Naive thymus-derived CD4-positive, alpha-beta T cell (primary cell): ENCODE measurements at regions of chr14 and their contacts with region 1.

Region 1: GRCh38 chr14:105086833-105087307 is 21.6 kb upstream of the GPR132 start:
- DNase-seq: peak; percentile 74 to 88 (median 84)
- ATAC-seq: peak; percentile 92
- H3K4me3 ChIP-seq: peak overlapping the region; percentile 63
- H3K4me3 Mint-ChIP-seq: peak overlapping the region; percentile 64 to 83 (median 78)
- H3K27ac ChIP-seq: peak overlapping the region; percentile 55
- H3K27ac Mint-ChIP-seq: peak overlapping the region in 8 of 9 donors; percentile 3 to 84 (median 55)
- H3K4me1 ChIP-seq: peaks cover 4 to 7% of the 10 kb centered on the region in 2 donors
- H3K4me1 Mint-ChIP-seq: peaks cover 8 to 22% (median 13%) of the 10 kb centered on the region in 7 donors
- H3K27me3 ChIP-seq: no peaks in the 10 kb centered on the region
- H3K27me3 Mint-ChIP-seq: peaks cover 0 to 27% (median 0%) of the 10 kb centered on the region in 5 donors

Region 2: GRCh38 chr14:104965561-104966231 is 121.2 kb before region 1 on chr14:
- CTCF ChIA-PET with region 1: no interaction called
- POLR2A ChIA-PET with region 1: no interaction called
- intact Hi-C with region 1: no loop called
- DNase-seq: peak in 1 of 9 donors; percentile 7
- ATAC-seq: no peak
- H3K4me3 ChIP-seq: no peak overlapping the region
- H3K4me3 Mint-ChIP-seq: no peak overlapping the region
- H3K27ac ChIP-seq: no peak overlapping the region
- H3K27ac Mint-ChIP-seq: no peak overlapping the region
- H3K4me1 ChIP-seq: no peaks in the 10 kb centered on the region
- H3K4me1 Mint-ChIP-seq: no peaks in the 10 kb centered on the region
- H3K27me3 ChIP-seq: peaks cover 0 to 4% of the 10 kb centered on the region in 2 donors
- H3K27me3 Mint-ChIP-seq: peaks cover 5 to 11% (median 8%) of the 10 kb centered on the region in 5 donors

Region 3: DNA sequence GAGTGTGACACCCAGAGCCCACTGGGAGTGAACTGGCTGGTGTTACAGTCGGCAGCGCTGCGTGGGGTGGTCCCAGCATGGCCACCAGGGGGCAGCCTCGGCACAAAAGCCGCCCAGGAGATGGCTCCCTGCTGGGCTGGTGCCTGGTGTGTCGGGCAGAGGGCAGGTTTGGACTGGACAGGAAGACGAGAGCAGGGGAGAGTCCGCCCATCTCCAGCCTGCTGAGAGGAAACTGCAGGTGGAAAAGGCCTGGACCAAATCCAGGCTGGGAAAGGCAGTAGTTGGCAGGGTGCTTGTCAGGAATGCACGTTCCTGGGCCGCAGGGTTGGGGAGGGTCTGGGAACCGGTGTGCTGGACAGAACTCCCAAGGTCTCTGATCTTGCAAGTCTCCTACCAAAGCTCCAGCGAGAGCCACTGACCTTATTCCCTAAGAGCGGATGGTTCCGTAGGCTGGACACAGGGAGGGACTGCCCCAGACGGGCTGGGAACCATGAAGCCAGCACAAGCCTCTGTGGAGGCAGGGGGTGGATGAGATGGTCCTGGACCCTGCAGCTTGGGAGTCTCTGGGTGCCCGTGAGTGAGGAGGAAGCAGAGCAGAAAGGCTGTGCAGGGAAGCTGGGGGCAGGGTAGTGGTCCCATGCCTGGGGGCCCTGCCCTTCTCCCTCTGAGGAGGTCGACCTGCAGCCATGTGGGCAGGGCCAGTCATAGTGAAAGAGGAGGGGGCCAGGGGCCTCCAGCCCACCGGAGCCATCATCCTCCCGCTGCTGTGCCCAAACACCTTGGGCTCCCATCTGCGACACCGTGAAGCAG is 110.5 kb before region 1 on chr14:
- CTCF ChIA-PET with region 1: no interaction called
- POLR2A ChIA-PET with region 1: interaction called, 3 read pairs
- intact Hi-C with region 1: loop called (anchors 1 kb)
- DNase-seq: peak; percentile 67 to 91 (median 83)
- ATAC-seq: peak; percentile 86
- H3K4me3 ChIP-seq: no peak overlapping the region
- H3K4me3 Mint-ChIP-seq: peak overlapping the region; percentile 41 to 92 (median 72)
- H3K27ac ChIP-seq: no peak overlapping the region
- H3K27ac Mint-ChIP-seq: peak overlapping the region in 4 of 9 donors; percentile 3 to 68 (median 33)
- H3K4me1 ChIP-seq: peaks cover 0 to 7% of the 10 kb centered on the region in 2 donors
- H3K4me1 Mint-ChIP-seq: peaks cover 5 to 19% (median 13%) of the 10 kb centered on the region in 7 donors
- H3K27me3 ChIP-seq: peaks cover 0 to 8% of the 10 kb centered on the region in 2 donors
- H3K27me3 Mint-ChIP-seq: peaks cover 8 to 33% (median 16%) of the 10 kb centered on the region in 5 donors

Region 4: DNA sequence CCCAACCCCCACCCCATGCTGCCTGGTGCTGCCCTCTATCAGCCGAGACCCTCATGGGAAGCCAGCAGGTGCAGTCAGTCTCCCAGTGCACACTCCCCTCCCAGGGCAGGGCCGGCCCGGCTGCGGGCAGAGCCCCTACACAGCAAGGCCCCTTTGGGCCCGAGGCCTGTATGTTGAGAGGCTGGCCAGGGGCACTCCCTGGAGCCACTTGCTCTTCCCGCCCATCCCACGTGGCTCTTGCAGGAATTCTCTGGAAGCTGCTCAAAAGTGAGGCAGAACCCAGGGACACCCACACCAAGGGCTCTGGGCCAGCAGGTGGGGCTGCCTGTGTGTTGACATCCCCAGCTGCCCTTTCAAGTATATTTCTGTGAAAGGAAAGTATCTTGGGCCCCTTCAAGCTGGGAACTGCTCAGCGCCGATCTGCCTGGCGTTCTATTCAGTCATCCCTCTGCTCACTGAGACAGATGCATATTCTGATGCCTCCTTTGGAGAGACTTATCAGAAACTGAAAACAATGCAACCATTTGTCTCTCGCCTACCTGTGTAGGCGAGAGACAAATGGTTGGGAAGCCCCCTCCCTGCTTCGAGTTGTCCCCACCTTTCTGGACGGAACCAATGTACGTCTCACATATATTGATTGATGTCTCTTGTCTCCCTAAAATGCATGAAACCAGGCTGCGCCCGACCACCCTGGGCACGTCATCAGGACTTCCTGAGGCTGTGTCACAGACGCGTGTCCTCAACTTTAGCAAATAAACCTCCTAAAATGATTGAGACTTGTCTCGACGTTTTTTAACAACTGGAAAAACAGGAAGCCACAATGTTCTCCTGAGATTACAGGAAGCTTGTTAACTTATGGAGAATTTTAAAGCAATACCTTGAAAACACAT is 27.6 kb before region 1 on chr14:
- CTCF ChIA-PET with region 1: interaction called, 39 read pairs
- POLR2A ChIA-PET with region 1: interaction called, 50 read pairs
- intact Hi-C with region 1: loop called (anchors 1 to 2 kb)
- DNase-seq: peak in 7 of 9 donors; percentile 74 to 91 (median 84)
- ATAC-seq: peak; percentile 67
- H3K4me3 ChIP-seq: peak overlapping the region; percentile 74
- H3K4me3 Mint-ChIP-seq: peak overlapping the region; percentile 59 to 96 (median 86)
- H3K27ac ChIP-seq: peak overlapping the region; percentile 96
- H3K27ac Mint-ChIP-seq: peak overlapping the region; percentile 91 to 99 (median 97)
- H3K4me1 ChIP-seq: peaks cover 44 to 58% of the 10 kb centered on the region in 2 donors
- H3K4me1 Mint-ChIP-seq: peaks cover 36 to 59% (median 52%) of the 10 kb centered on the region in 7 donors
- H3K27me3 ChIP-seq: no peaks in the 10 kb centered on the region
- H3K27me3 Mint-ChIP-seq: no peaks in the 10 kb centered on the region

Region 5: GRCh38 chr14:105168979-105169507 is 82.2 kb after region 1 on chr14:
- CTCF ChIA-PET with region 1: interaction called, 3 read pairs
- POLR2A ChIA-PET with region 1: no interaction called
- intact Hi-C with region 1: loop called in 1 of 2 experiments (anchors 5 kb)
- DNase-seq: peak in 5 of 9 donors; percentile 29 to 52 (median 36)
- ATAC-seq: peak; percentile 51
- H3K4me3 ChIP-seq: no peak overlapping the region
- H3K4me3 Mint-ChIP-seq: peak overlapping the region; percentile 14 to 81 (median 64)
- H3K27ac ChIP-seq: no peak overlapping the region
- H3K27ac Mint-ChIP-seq: no peak overlapping the region
- H3K4me1 ChIP-seq: peaks cover 6 to 11% of the 10 kb centered on the region in 2 donors
- H3K4me1 Mint-ChIP-seq: peaks cover 0 to 13% (median 5%) of the 10 kb centered on the region in 7 donors
- H3K27me3 ChIP-seq: peaks cover 0 to 6% of the 10 kb centered on the region in 2 donors
- H3K27me3 Mint-ChIP-seq: peaks cover 0 to 23% (median 15%) of the 10 kb centered on the region in 5 donors

Region 6: DNA sequence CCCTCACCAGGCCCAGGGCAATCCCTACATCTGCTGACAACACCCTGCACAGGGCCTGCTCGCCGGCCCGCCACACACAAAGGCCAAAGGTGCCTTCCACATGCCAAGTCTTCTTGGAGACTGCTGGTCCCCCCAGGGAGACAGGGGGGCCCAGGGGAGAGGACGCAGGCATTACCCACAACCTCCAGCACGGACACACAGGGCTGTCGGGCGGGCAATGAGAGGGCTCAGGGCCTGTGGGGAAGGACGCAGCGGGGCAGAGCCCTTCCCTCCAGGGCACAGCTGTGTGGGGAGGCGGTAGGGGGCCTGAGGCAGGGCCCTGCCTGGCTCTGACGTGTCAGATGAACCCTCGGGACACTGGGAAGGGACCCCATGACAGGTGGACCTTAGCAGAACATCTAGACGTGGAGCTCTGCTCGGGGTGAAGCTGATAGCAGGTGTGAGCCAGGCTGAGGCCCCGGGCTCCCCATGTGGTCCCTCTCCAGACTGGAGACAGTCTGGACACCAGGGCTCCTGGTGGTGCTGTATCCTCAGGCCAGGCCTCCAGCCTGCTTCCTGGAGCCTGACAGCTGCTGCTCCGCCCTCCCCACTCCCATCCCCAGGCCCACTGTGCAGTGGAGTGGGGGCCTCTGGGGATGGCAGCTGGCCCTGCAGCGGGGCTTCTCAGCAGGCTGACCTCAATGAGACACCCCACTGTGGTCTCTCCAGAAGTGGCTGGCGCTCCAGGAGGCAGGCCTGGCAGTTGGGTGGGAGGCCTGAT is 125.9 kb after region 1 on chr14:
- CTCF ChIA-PET with region 1: no interaction called
- POLR2A ChIA-PET with region 1: no interaction called
- intact Hi-C with region 1: no loop called
- DNase-seq: no peak
- ATAC-seq: no peak
- H3K4me3 ChIP-seq: no peak overlapping the region
- H3K4me3 Mint-ChIP-seq: no peak overlapping the region
- H3K27ac ChIP-seq: no peak overlapping the region
- H3K27ac Mint-ChIP-seq: no peak overlapping the region
- H3K4me1 ChIP-seq: no peaks in the 10 kb centered on the region
- H3K4me1 Mint-ChIP-seq: peaks cover 0 to 10% (median 0%) of the 10 kb centered on the region in 7 donors
- H3K27me3 ChIP-seq: no peaks in the 10 kb centered on the region
- H3K27me3 Mint-ChIP-seq: no peaks in the 10 kb centered on the region

Region 7: GRCh38 chr14:105281371-105282097 is 194.7 kb after region 1 on chr14:
- CTCF ChIA-PET with region 1: no interaction called
- POLR2A ChIA-PET with region 1: no interaction called
- intact Hi-C with region 1: loop called (anchors 1 kb)
- DNase-seq: peak in 6 of 9 donors; percentile 10 to 41 (median 30)
- ATAC-seq: peak; percentile 26
- H3K4me3 ChIP-seq: no peak overlapping the region
- H3K4me3 Mint-ChIP-seq: peak overlapping the region in 2 of 10 donors; percentile 1 to 5
- H3K27ac ChIP-seq: no peak overlapping the region
- H3K27ac Mint-ChIP-seq: peak overlapping the region in 5 of 9 donors; percentile 5 to 74 (median 47)
- H3K4me1 ChIP-seq: peaks cover 0 to 12% of the 10 kb centered on the region in 2 donors
- H3K4me1 Mint-ChIP-seq: peaks cover 13 to 55% (median 46%) of the 10 kb centered on the region in 7 donors
- H3K27me3 ChIP-seq: no peaks in the 10 kb centered on the region
- H3K27me3 Mint-ChIP-seq: no peaks in the 10 kb centered on the region

Region 8: GRCh38 chr14:105527661-105528581 is 441.1 kb after region 1 on chr14:
- CTCF ChIA-PET with region 1: no interaction called
- POLR2A ChIA-PET with region 1: no interaction called
- intact Hi-C with region 1: loop called (anchors 2 to 5 kb)
- DNase-seq: peak; percentile 65 to 86 (median 78)
- ATAC-seq: peak; percentile 89
- H3K4me3 ChIP-seq: peak overlapping the region; percentile 54
- H3K4me3 Mint-ChIP-seq: peak overlapping the region; percentile 42 to 89 (median 72)
- H3K27ac ChIP-seq: no peak overlapping the region
- H3K27ac Mint-ChIP-seq: peak overlapping the region in 2 of 9 donors; percentile 32 to 49
- H3K4me1 ChIP-seq: peaks cover 9 to 14% of the 10 kb centered on the region in 2 donors
- H3K4me1 Mint-ChIP-seq: peaks cover 0 to 24% (median 16%) of the 10 kb centered on the region in 7 donors
- H3K27me3 ChIP-seq: peaks cover 0 to 4% of the 10 kb centered on the region in 2 donors
- H3K27me3 Mint-ChIP-seq: peaks cover 0 to 43% (median 0%) of the 10 kb centered on the region in 5 donors